ENCODE measurements at regions of chr6 and their contacts with region 1.

Region 1: DNA sequence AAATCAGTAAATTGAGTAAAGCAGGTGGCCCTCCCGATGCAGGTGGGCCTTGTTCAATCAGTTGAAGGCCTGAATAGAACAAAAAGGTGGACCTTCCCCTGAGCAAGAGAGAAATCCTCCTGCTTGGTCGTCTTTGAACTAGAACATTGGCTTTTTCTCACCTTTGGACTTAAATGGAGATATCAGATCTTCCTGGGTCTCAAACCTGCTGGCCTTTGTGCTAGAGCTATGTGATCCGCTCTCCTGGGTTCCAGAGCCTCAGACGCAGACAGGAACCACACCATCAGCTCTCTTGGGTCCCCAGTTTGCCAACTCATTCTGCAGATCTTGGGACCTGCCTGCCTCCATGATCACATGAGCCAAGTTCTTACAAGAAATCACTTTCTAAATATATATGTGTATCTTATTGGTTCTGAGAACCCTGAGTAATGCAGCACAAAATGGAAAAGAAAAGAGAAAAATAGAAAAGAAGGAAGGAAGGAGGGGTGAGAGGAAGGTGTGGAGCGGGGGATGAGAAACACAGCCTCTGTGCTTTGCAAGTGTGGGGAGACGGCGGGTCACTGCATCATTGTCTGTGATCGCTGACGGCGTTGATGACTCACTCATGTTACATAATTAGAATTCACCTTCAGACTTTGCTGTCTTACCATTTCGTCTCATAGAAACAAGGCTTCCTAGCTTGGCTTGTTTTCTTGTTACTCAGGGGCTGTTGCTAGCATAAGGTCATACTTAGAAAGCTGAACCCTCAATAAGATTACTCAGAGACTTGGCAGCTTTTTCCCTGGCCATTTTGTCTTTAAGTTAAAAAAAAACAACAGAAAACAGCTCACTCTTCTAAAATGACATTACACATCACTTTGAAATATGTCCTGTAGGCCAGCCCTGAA is 85.7 kb upstream of the NEDD9 start:
- DNase-seq: peak; percentile 98
- ATAC-seq: peak; percentile 91
- H3K4me3 ChIP-seq: no peak overlapping the region
- H3K27ac ChIP-seq: peak overlapping the region; percentile 25; the same call in 1 of the 2 replicates
- H3K4me1 ChIP-seq: peaks cover 10% of the 10 kb centered on the region
- H3K27me3 ChIP-seq: no peaks in the 10 kb centered on the region
- CTCF ChIP-seq: no peak
- POLR2A ChIP-seq: no peak
- RAD21 ChIP-seq: peak; percentile 26; the same call in 1 of the 2 replicates

Region 2: DNA sequence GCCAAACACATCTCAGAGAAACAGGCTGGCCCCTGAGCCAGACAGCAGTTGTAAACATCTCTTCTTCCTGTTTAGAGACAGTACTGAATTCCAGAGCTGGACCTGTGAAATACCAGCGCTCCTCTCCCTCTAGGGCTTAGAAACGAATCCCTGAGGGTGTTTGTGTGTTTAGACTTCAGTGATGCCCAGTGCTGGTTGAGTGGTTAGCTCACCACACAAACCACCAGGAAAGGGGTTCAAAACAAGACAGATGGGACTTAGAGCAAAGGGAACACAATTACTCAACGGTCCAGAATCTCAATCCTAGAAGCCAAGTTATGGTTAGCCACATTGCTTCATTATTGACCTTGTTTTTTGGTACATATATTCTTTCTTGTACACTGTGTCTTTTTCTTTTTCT is 110.8 kb after region 1 on chr6:
- CTCF ChIA-PET with region 1: interaction called, 4 read pairs
- POLR2A ChIA-PET with region 1: no interaction called
- dilution Hi-C with region 1: no loop called
- in situ Hi-C with region 1: no loop called
- intact Hi-C with region 1: loop called (anchors 5 kb)
- DNase-seq: peak; percentile 76
- ATAC-seq: peak; percentile 75
- H3K4me3 ChIP-seq: no peak overlapping the region
- H3K27ac ChIP-seq: peak overlapping the region; percentile 56; the same call in 1 of the 2 replicates
- H3K4me1 ChIP-seq: peaks cover 39% of the 10 kb centered on the region
- H3K27me3 ChIP-seq: no peaks in the 10 kb centered on the region
- CTCF ChIP-seq: no peak
- POLR2A ChIP-seq: no peak
- RAD21 ChIP-seq: no peak

Region 3: DNA sequence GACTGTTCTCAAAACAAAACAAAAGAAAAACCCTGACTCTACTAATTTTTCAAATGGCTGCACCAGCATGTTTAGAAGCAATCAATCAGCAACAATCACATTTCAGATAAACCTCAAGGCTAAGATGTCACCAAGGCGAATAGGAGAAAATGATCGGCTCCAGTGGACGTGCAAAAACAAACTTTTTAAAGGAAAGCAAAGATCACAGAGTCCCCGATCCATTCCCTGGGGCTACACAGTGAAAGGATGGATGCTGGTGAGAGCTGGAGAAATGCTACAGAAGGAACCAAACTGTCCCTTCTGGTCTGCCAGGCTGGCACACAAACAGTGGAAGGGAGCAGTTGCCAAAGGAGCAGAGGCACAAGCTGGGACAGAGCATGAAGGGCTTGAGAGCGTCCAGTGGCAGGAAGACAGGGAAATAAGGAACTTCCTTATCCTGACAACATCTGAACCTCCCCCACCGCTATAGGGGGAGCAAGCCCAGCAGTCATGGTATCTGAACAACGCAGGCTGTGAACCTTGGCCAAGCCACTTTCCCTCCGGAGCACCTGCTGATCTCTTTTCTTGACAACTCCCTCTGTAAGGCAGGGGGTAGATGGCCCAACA is 620.3 kb after region 1 on chr6:
- CTCF ChIA-PET with region 1: no interaction called
- POLR2A ChIA-PET with region 1: no interaction called
- dilution Hi-C with region 1: no loop called
- in situ Hi-C with region 1: no loop called
- intact Hi-C with region 1: no loop called
- DNase-seq: no peak
- ATAC-seq: peak; percentile 24; the same call in 1 of the 2 replicates
- H3K4me3 ChIP-seq: no peak overlapping the region
- H3K27ac ChIP-seq: no peak overlapping the region
- H3K4me1 ChIP-seq: peaks cover 4% of the 10 kb centered on the region
- H3K27me3 ChIP-seq: no peaks in the 10 kb centered on the region
- CTCF ChIP-seq: no peak
- POLR2A ChIP-seq: no peak
- RAD21 ChIP-seq: no peak